ENCODE measurements at regions of chr2 and their contacts with region 1.

Region 1: DNA sequence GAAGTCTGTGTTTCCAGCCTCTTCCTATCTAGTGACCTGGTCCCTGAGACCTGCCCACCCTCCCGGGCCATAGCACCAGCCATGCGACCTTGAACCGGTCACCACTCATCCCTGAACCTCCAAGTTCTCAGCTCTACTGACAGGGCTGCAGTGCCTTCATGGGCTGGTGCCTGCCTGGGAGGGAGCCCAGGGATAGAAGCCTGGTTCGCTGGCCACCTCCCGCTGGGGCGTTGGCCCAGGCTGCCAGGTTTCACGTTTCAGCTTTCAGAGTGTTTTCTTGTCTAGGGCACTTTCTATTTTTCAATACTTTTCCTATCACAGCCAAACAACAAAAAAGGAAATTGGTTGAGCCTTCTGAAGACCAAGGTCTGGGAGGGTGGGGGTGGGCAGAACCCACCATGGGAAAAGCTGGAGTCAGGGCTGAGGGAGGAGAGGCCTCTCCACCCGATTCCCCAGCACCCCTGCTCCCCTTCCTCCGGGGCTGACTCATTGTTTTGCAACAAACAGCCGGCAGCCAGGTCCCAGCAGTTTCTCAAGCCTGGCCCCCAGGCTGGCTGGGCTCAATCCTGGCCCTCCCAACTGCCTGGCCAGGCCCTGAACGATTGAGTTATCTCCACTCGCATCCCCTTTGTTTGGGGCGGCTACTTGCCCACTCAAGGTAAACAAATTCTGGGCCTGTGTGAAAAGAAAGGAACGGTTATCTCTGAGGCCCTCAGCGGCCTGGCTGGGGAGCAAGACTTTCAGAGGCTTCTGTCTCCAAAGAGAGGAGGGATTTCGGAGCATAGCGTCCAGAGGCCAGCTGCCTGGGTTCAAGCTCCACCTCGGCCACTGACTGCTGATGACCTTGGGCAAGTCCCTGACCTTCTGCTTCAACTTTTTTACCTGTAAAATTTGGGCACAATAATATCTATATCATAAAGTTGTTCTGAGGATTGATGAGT is 47.5 kb downstream of the ZFP36L2 start:
- DNase-seq: no peak
- ATAC-seq: no peak
- H3K4me3 Mint-ChIP-seq: no peak overlapping the region
- H3K27ac Mint-ChIP-seq: peak overlapping the region; percentile 71
- H3K4me1 Mint-ChIP-seq: peaks cover 51% of the 10 kb centered on the region
- H3K27me3 Mint-ChIP-seq: no peaks in the 10 kb centered on the region

Region 2: GRCh38 chr2:43018179-43019024 is 160.5 kb before region 1 on chr2:
- CTCF ChIA-PET with region 1: no interaction called
- DNase-seq: no peak
- ATAC-seq: no peak
- H3K4me3 Mint-ChIP-seq: no peak overlapping the region
- H3K27ac Mint-ChIP-seq: no peak overlapping the region
- H3K4me1 Mint-ChIP-seq: no peaks in the 10 kb centered on the region
- H3K27me3 Mint-ChIP-seq: no peaks in the 10 kb centered on the region

Region 3: GRCh38 chr2:43059183-43059897 is 119.5 kb before region 1 on chr2:
- CTCF ChIA-PET with region 1: no interaction called
- DNase-seq: peak; percentile 81
- ATAC-seq: peak; percentile 91
- H3K4me3 Mint-ChIP-seq: peak overlapping the region; percentile 10
- H3K27ac Mint-ChIP-seq: peak overlapping the region; percentile 85
- H3K4me1 Mint-ChIP-seq: peaks cover 23% of the 10 kb centered on the region
- H3K27me3 Mint-ChIP-seq: peaks cover 29% of the 10 kb centered on the region

Region 4: GRCh38 chr2:43097644-43098408 is 81.0 kb before region 1 on chr2:
- CTCF ChIA-PET with region 1: no interaction called
- DNase-seq: no peak
- ATAC-seq: no peak
- H3K4me3 Mint-ChIP-seq: no peak overlapping the region
- H3K27ac Mint-ChIP-seq: no peak overlapping the region
- H3K4me1 Mint-ChIP-seq: no peaks in the 10 kb centered on the region
- H3K27me3 Mint-ChIP-seq: no peaks in the 10 kb centered on the region

Region 5: GRCh38 chr2:43194121-43194869 is 15.4 kb after region 1 on chr2:
- CTCF ChIA-PET with region 1: interaction called, 11 read pairs
- DNase-seq: no peak
- ATAC-seq: peak; percentile 12
- H3K4me3 Mint-ChIP-seq: peak overlapping the region; percentile 65
- H3K27ac Mint-ChIP-seq: peak overlapping the region; percentile 89
- H3K4me1 Mint-ChIP-seq: peaks cover 47% of the 10 kb centered on the region
- H3K27me3 Mint-ChIP-seq: no peaks in the 10 kb centered on the region